Activated B cell treated with CpG ODN at 0.5 μM for 24 hours (primary cell): ENCODE measurements at regions of chr6 and their contacts with region 1.

Region 1: DNA sequence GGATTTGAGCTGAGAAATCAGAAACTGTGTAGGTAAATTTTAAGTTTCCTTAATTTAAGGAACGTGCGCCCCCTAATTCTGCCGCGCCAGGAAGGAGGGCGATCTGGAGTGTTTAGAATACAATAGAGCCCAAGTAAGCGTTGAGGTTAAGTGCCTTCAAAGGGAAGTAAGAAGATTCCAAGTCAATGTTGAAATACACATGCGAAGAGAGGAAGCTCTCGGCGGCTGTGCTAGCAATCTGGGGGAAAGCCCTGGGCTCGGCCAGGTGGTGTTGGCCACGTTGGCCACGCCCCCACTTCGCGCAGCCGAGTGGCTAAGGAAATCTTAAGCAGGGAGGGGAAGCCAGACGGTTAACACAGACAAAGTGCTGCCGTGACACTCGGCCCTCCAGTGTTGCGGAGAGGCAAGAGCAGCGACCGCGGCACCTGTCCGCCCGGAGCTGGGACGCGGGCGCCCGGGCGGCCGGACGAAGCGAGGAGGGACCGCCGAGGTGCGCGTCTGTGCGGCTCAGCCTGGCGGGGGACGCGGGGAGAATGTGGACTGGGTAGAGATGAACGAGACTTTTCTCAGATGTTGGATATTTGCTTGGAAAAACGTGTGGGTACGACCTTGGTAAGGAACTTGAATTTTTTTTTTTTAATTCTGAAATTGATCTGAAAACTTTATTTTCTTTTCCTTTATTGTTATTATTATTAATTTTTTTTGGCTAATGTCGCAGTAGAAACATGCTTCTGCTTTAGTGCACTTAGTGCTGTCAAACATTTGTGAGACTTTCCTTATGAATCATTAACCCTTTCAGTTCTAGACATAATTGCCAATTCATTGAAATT is at the start of gene PRDM1:
- DNase-seq: peak; percentile 84
- ATAC-seq: peak; percentile 87
- H3K4me3 Mint-ChIP-seq: peak within 1 kb of the TSS; percentile 90
- H3K27ac Mint-ChIP-seq: peak within 1 kb of the TSS; percentile 84
- H3K4me1 Mint-ChIP-seq: peaks cover 66% of the 10 kb centered on the region
- H3K27me3 Mint-ChIP-seq: peaks cover 5% of the 10 kb centered on the region
- CTCF ChIP-seq: no peak
- total RNA-seq, gene PRDM1: 16.3 and 16.4 TPM in 2 replicates

Region 2: GRCh38 chr6:105431226-105431625 is 655.0 kb before region 1 on chr6:
- CTCF ChIA-PET with region 1: no interaction called
- POLR2A ChIA-PET with region 1: no interaction called
- intact Hi-C with region 1: loop called (anchors 2 kb)
- DNase-seq: no peak
- ATAC-seq: no peak
- H3K4me3 Mint-ChIP-seq: no peak overlapping the region
- H3K27ac Mint-ChIP-seq: no peak overlapping the region
- H3K4me1 Mint-ChIP-seq: no peaks in the 10 kb centered on the region
- H3K27me3 Mint-ChIP-seq: peaks cover 8% of the 10 kb centered on the region
- CTCF ChIP-seq: no peak

Region 3: GRCh38 chr6:105793130-105793529 is 293.1 kb before region 1 on chr6:
- CTCF ChIA-PET with region 1: interaction called, 3 read pairs
- POLR2A ChIA-PET with region 1: no interaction called
- intact Hi-C with region 1: loop called (anchors 1 kb)
- DNase-seq: no peak
- ATAC-seq: peak; percentile 88
- H3K4me3 Mint-ChIP-seq: no peak overlapping the region
- H3K27ac Mint-ChIP-seq: no peak overlapping the region
- H3K4me1 Mint-ChIP-seq: peaks cover 20% of the 10 kb centered on the region
- H3K27me3 Mint-ChIP-seq: no peaks in the 10 kb centered on the region
- CTCF ChIP-seq: no peak

Region 4: DNA sequence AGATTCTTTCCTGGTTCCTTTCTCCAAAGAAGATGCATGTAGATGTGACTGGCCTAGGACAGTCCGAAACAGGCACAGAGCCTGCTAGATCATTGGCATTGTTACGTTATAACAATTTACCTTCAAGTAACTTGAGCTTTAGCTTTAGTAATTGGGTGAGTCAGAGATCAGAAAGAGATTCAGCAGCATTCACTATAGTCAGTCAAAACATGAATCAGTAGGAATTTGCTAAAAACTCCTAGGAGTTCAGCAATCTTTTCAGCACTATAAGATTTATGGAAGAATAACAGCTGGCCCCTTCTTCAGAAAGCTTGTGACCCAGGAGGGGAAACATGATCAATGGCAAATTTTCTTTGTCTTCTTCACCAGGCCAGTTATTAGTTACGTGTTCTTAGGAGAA is 281.8 kb before region 1 on chr6:
- CTCF ChIA-PET with region 1: no interaction called
- POLR2A ChIA-PET with region 1: no interaction called
- intact Hi-C with region 1: no loop called
- DNase-seq: no peak
- ATAC-seq: no peak
- H3K4me3 Mint-ChIP-seq: no peak overlapping the region
- H3K27ac Mint-ChIP-seq: no peak overlapping the region
- H3K4me1 Mint-ChIP-seq: no peaks in the 10 kb centered on the region
- H3K27me3 Mint-ChIP-seq: no peaks in the 10 kb centered on the region
- CTCF ChIP-seq: no peak

Region 5: DNA sequence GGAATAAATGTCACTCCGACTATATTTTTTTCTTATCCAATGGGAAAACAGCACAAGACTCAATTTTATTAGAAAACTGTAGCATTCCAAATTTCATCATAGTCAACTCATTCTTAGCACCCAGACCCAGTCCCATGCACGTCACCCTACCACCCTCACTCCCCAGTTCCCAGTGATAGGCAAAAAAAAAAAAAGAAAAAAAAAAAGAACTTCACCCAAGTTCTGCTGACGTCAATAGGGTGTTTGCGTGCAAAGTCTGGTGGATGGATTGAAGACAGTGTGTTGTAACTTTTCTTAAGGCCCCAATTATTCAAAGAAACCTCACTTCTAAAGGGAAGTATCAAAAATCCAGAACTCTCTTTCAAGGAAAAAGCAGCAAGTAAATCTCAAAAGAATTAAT is 214.0 kb before region 1 on chr6:
- CTCF ChIA-PET with region 1: no interaction called
- POLR2A ChIA-PET with region 1: no interaction called
- intact Hi-C with region 1: no loop called
- DNase-seq: no peak
- ATAC-seq: no peak
- H3K4me3 Mint-ChIP-seq: no peak overlapping the region
- H3K27ac Mint-ChIP-seq: no peak overlapping the region
- H3K4me1 Mint-ChIP-seq: peaks cover 73% of the 10 kb centered on the region
- H3K27me3 Mint-ChIP-seq: peaks cover 3% of the 10 kb centered on the region
- CTCF ChIP-seq: no peak

Region 6: GRCh38 chr6:105898286-105898685 is 187.9 kb before region 1 on chr6:
- CTCF ChIA-PET with region 1: no interaction called
- POLR2A ChIA-PET with region 1: interaction called, 10 read pairs
- intact Hi-C with region 1: loop called (anchors 1 kb)
- DNase-seq: no peak
- ATAC-seq: peak; percentile 28
- H3K4me3 Mint-ChIP-seq: no peak overlapping the region
- H3K27ac Mint-ChIP-seq: no peak overlapping the region
- H3K4me1 Mint-ChIP-seq: peaks cover 18% of the 10 kb centered on the region
- H3K27me3 Mint-ChIP-seq: peaks cover 6% of the 10 kb centered on the region
- CTCF ChIP-seq: no peak

Region 7: GRCh38 chr6:106014930-106015329 is 71.3 kb before region 1 on chr6:
- CTCF ChIA-PET with region 1: no interaction called
- POLR2A ChIA-PET with region 1: no interaction called
- intact Hi-C with region 1: no loop called
- DNase-seq: no peak
- ATAC-seq: no peak
- H3K4me3 Mint-ChIP-seq: no peak overlapping the region
- H3K27ac Mint-ChIP-seq: no peak overlapping the region
- H3K4me1 Mint-ChIP-seq: no peaks in the 10 kb centered on the region
- H3K27me3 Mint-ChIP-seq: peaks cover 14% of the 10 kb centered on the region
- CTCF ChIP-seq: no peak

Region 8: DNA sequence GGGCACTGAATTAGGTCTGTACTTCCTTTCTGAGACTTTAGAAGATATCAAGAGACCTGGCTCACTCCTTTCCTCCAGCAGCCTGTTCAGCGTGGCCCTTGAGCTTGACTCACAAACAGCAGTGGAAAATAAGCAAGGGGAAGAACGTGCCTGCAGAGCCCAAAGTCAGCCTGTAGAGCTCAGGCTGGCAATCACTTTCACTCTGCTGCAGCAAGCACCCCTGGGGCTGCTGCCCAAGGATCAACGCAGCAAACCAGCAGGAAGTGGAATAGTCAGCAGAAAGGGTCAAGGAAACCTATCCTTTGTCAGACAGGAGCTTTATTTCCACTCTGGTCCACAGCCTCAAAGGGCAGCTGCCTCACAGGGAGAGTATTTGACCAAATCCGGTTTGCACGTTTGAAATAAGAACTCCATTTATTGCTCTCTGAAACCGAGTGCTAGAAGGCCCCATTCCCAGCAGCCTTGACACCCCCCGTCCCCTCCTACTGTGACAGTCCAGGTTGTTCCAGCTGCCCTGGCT is 77.3 kb after region 1 on chr6:
- CTCF ChIA-PET with region 1: interaction called, 6 read pairs
- POLR2A ChIA-PET with region 1: interaction called, 16 read pairs
- intact Hi-C with region 1: loop called (anchors 1 kb)
- DNase-seq: peak; percentile 37
- ATAC-seq: peak; percentile 57
- H3K4me3 Mint-ChIP-seq: peak overlapping the region; percentile 36
- H3K27ac Mint-ChIP-seq: peak overlapping the region; percentile 92
- H3K4me1 Mint-ChIP-seq: peaks cover 35% of the 10 kb centered on the region
- H3K27me3 Mint-ChIP-seq: no peaks in the 10 kb centered on the region
- CTCF ChIP-seq: no peak

Region 9: DNA sequence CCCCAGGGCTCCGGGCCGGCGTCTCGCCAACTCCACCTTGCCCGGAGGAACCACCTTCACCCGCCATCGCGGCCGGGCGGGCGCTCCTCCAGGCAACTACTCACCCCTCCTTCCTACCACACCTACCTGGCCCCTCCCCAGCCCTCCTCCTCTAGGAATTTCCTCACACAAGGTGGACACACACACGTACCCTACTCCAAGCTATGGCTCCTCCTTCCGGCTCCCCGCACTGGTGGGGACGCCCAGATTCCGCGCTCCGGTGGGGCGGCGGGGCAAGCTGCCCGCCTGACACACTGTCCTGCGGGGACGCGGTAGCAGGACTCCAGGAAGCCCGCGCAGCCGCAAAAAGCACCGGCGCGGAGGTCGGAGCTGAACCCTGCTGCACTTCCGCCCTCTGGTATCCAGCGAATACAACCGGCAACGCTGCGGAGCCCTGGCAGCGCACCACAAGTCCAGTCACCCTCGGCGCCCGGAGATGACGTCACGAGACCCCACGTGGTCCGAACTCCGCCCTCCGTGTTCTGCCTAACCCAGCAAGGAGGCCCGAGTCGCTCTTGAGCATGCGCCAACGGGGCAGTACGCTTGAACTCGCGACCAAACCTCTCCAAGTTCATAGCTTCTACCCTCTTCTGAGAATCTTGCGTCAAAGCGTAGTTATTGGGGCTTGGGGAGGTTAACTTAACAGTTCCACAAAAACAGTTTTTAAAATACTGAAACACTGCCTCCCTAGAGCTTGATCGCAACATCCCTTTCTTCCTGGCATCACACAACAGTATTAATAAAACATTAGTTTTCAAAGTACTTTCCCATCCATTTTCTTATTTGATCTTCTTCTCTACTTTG is 239.4 kb after region 1 on chr6 and contains the start of gene ATG5:
- CTCF ChIA-PET with region 1: no interaction called
- POLR2A ChIA-PET with region 1: interaction called, 5 read pairs
- intact Hi-C with region 1: loop called (anchors 2 kb)
- DNase-seq: peak; percentile 99
- ATAC-seq: peak; percentile 93
- H3K4me3 Mint-ChIP-seq: peak within 1 kb of the TSS; percentile 99
- H3K27ac Mint-ChIP-seq: peak within 1 kb of the TSS; percentile 94
- H3K4me1 Mint-ChIP-seq: peaks cover 42% of the 10 kb centered on the region
- H3K27me3 Mint-ChIP-seq: peaks cover 1% of the 10 kb centered on the region
- CTCF ChIP-seq: no peak
- total RNA-seq, gene ATG5: 29.7 and 30.3 TPM in 2 replicates

Region 10: GRCh38 chr6:106372838-106373501 is 286.8 kb after region 1 on chr6:
- CTCF ChIA-PET with region 1: no interaction called
- POLR2A ChIA-PET with region 1: no interaction called
- intact Hi-C with region 1: no loop called
- DNase-seq: no peak
- ATAC-seq: no peak
- H3K4me3 Mint-ChIP-seq: no peak overlapping the region
- H3K27ac Mint-ChIP-seq: no peak overlapping the region
- H3K4me1 Mint-ChIP-seq: peaks cover 4% of the 10 kb centered on the region
- H3K27me3 Mint-ChIP-seq: peaks cover 10% of the 10 kb centered on the region
- CTCF ChIP-seq: no peak